ENCODE measurements at regions of chr9 and their contacts with region 1.

Region 1: GRCh38 chr9:12091865-12092527 is 601.2 kb upstream of the TYRP1 start:
- DNase-seq: no peak
- H3K27ac ChIP-seq: no peak overlapping the region
- CTCF ChIP-seq: no peak

Region 2: GRCh38 chr9:12069366-12069765 is 22.6 kb before region 1 on chr9:
- CTCF ChIA-PET with region 1: no interaction called
- POLR2A ChIA-PET with region 1: no interaction called
- DNase-seq: no peak
- H3K27ac ChIP-seq: no peak overlapping the region
- CTCF ChIP-seq: no peak

Region 3: DNA sequence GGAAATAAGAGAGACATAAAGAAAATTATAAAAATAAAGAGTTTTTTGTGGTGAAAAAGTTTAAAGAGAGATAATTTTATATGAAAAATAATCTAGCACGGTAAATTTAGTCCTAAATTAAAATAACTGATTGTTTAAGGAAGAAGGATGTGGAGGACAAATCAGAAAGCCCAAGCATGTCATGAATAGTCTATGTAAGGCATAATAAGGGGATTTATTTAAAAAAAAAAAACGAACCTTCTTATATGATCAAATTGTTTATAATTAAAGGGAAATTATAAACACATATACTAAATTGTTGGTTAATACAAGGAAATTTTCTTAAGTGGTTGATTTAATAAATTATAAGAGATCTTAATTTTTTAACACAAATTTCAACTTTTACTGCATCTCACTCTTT is 49.4 kb after region 1 on chr9:
- CTCF ChIA-PET with region 1: no interaction called
- POLR2A ChIA-PET with region 1: interaction called, 11 read pairs
- DNase-seq: no peak
- H3K27ac ChIP-seq: no peak overlapping the region
- CTCF ChIP-seq: no peak

Region 4: GRCh38 chr9:12155401-12156134 is 63.6 kb after region 1 on chr9:
- CTCF ChIA-PET with region 1: no interaction called
- POLR2A ChIA-PET with region 1: no interaction called
- DNase-seq: no peak
- H3K27ac ChIP-seq: no peak overlapping the region
- CTCF ChIP-seq: no peak